ENCODE measurements at regions of chr19 and their contacts with region 1.

Region 1: DNA sequence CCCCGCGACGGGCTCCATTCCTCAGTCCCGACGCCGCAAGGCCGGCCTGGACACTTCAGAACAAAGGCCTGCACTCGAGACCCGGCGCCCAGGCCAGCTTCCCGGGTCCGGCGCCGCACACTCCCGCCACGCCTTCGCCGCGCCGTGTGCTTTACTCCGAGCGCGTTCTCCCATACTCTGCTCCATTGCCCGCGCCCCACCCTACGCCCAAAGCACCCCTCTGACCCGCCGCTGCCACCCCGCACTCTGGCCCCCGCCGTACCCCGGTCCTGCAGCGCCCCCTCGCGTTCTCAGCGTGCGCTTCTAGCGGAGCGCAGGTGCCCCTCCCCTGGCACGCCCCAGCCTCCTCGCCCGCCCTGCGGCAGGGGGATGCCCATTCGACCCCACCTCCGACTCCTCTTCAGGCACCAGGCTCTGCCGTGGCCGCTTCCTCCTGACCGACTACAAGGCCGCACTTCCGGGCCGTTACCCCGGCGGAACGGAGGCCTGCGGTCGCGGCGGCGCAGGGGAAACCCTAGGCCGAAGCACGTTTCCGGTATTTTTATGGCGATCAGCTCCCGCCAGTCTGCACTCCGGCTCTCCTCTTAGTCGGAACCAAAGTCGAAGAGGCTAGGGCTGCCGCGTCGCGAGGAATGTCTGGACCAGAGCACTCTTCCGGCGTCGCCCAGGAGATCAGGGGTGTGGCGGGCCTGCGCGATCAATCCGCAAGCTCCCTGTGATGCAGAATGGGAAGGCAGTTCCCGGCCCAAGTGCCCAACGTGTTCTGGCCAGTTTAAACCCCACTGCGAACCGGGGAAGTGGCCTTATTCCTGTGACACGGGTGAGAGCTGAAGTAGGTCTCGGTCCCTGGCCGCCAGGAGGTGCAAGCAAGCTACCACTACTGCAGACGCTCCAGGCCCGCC is at the start of gene ZBTB45:
- DNase-seq: peak; percentile 70 to 96
- H3K4me3 ChIP-seq: peak within 1 kb of the TSS; percentile 87 to 90
- H3K27ac ChIP-seq: peak within 1 kb of the TSS; percentile 94 to 96
- H3K4me1 ChIP-seq: peaks cover 20 to 29% of the 10 kb centered on the region in 2 donors
- H3K27me3 ChIP-seq: no peaks in the 10 kb centered on the region
- CTCF ChIP-seq: peak; percentile 76 to 94 (median 93)
- total RNA-seq, gene ZBTB45: 46.5 TPM

Region 2: DNA sequence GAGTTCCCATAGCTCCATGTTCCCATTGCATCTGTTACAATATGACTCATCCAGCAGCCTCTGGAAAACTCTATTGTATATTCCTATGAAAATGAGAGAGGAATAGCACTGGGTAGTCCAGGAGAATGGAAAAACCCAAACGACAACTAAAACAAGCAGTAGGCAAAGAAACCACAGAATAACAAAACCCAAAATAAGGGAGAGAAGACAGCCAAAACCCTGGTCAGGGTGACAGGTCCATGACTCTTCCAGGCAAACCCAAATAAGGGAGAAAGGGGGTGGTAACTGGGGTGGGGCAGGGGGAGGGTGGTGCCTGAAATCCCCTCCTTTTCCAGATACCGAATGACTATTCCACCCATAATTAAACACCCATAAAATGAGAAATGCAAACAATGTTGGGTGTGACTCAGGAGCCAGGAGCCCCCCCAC is 244.8 kb before region 1 on chr19:
- intact Hi-C with region 1: no loop called
- DNase-seq: no peak
- H3K4me3 ChIP-seq: no peak overlapping the region
- H3K27ac ChIP-seq: no peak overlapping the region
- H3K4me1 ChIP-seq: no peaks in the 10 kb centered on the region
- H3K27me3 ChIP-seq: no peaks in the 10 kb centered on the region
- CTCF ChIP-seq: no peak

Region 3: DNA sequence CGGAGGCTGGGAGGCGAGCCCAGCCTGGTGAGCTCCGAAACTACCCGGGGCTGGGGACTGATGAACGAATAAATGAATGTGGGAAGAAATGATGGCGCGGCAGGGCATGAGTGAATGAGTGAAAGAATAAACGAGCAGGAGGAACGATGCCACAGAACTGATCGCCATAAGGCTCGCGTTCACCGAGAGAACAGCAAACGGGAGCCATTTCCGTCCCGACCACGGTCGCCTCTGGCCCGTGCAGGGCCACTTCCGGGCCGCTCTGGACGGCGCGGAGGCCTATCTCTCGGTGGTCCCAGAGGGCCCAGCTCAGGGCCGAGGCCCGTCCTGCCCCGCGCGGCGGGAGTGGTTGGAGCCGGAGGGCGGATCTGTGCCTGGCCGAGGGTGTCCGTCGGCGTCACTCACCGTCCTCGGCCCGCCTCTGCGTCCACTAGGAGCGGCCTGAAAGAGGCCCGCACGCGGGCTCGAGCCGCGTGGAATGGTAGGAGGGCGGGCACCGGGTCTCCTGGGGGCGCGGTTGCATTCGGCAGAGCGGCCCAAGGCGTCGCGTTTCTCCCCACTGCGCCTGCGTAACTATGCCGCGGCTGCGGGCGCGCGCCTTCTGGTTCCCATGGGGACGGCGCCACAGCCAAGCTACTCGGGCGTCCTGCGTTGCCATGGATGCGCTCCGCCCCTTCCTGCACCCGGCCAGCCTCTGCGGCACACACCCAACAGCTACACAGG is 157.2 kb before region 1 on chr19 and contains the start of gene ZNF497:
- intact Hi-C with region 1: loop called (anchors 1 kb)
- DNase-seq: peak; percentile 78 to 97
- H3K4me3 ChIP-seq: peak within 1 kb of the TSS; percentile 67 to 74
- H3K27ac ChIP-seq: peak within 1 kb of the TSS; percentile 86 to 94
- H3K4me1 ChIP-seq: peaks cover 0 to 7% of the 10 kb centered on the region in 2 donors
- H3K27me3 ChIP-seq: no peaks in the 10 kb centered on the region
- CTCF ChIP-seq: no peak
- total RNA-seq, gene ZNF497: not detected

Region 4: DNA sequence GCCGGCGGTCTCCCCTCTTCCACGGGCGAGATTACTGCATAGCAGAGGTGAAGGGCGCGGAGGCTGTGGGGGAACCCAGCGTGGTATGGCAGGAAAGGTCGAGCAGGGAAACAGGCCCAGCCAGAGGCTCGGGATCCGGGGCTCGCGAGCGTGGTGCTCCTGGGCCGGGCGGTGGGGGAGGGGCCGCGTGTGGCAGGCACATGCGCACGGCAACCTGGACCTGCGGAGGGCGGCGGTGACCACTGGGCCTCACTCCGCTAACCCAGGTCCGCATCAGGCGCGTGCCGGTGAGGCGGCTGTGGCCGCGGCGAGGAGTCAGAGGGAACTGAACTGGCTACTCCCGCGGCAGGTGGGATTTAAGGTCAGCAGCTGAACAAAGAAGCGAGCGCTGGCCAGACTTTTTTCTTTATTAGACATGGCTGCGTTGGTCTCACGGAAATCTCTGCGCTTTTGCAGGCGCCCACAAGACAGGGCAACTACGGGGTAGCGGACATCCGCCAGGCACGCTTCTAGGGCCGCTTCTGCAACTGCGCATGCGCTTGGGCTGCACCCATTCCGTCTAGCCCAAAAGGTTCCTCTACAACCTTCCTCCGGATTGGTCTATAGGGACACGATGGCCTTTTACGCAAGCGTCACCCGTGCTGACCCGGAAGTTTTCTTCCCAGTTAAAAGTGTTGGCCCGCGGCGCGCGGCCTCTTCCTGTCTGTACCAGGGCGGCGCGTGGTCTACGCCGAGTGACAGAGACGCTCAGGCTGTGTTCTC is 132.8 kb before region 1 on chr19 and contains the start of gene RPS5:
- intact Hi-C with region 1: loop called (anchors 1 kb)
- DNase-seq: peak; percentile 87 to 98
- H3K4me3 ChIP-seq: peak within 1 kb of the TSS; percentile 81 to 84
- H3K27ac ChIP-seq: peak within 1 kb of the TSS; percentile 87 to 96
- H3K4me1 ChIP-seq: peaks cover 10 to 31% of the 10 kb centered on the region in 2 donors
- H3K27me3 ChIP-seq: no peaks in the 10 kb centered on the region
- CTCF ChIP-seq: no peak
- total RNA-seq, gene RPS5: 1,483 TPM

Region 5: GRCh38 chr19:58499021-58499927 is 20.3 kb before region 1 on chr19:
- intact Hi-C with region 1: loop called (anchors 1 kb)
- DNase-seq: peak; percentile 96 to 100
- H3K4me3 ChIP-seq: peak overlapping the region; percentile 60 to 64
- H3K27ac ChIP-seq: peak overlapping the region; percentile 76 to 79
- H3K4me1 ChIP-seq: peaks cover 11 to 18% of the 10 kb centered on the region in 2 donors
- H3K27me3 ChIP-seq: no peaks in the 10 kb centered on the region
- CTCF ChIP-seq: peak in 2 of 3 experiments; percentile 10 to 42

Region 6: GRCh38 chr19:58558623-58559274 is 39.1 kb after region 1 on chr19:
- intact Hi-C with region 1: loop called (anchors 2 kb)
- DNase-seq: peak; percentile 92 to 99
- H3K4me3 ChIP-seq: peak overlapping the region; percentile 67 to 75
- H3K27ac ChIP-seq: peak overlapping the region; percentile 98 to 99
- H3K4me1 ChIP-seq: peaks cover 28 to 54% of the 10 kb centered on the region in 2 donors
- H3K27me3 ChIP-seq: no peaks in the 10 kb centered on the region
- CTCF ChIP-seq: no peak

Measured in ascending aorta (tissue), 2 donors.